ENCODE measurements at regions of chr17 and their contacts with region 1.

Region 1: GRCh38 chr17:50161023-50161910 is 4.5 kb upstream of the SGCA start:
- H3K4me3 ChIP-seq: peak overlapping the region; percentile 54
- H3K27ac ChIP-seq: peak overlapping the region; percentile 17; the same call in 1 of the 2 replicates
- H3K4me1 ChIP-seq: no peaks in the 10 kb centered on the region
- CTCF ChIP-seq: peak; percentile 100

Region 2: GRCh38 chr17:50101346-50102163 is 59.7 kb before region 1 on chr17:
- CTCF ChIA-PET with region 1: interaction called, 16 read pairs
- POLR2A ChIA-PET with region 1: no interaction called
- H3K4me3 ChIP-seq: no peak overlapping the region
- H3K27ac ChIP-seq: no peak overlapping the region
- H3K4me1 ChIP-seq: peaks cover 7% of the 10 kb centered on the region
- CTCF ChIP-seq: no peak

Region 3: GRCh38 chr17:50114849-50115357 is 46.4 kb before region 1 on chr17:
- CTCF ChIA-PET with region 1: interaction called, 51 read pairs
- POLR2A ChIA-PET with region 1: no interaction called
- H3K4me3 ChIP-seq: no peak overlapping the region
- H3K27ac ChIP-seq: no peak overlapping the region
- H3K4me1 ChIP-seq: no peaks in the 10 kb centered on the region; the same call in 1 of the 2 replicates
- CTCF ChIP-seq: peak; percentile 58

Region 4: GRCh38 chr17:50123649-50124349 is 37.5 kb before region 1 on chr17:
- CTCF ChIA-PET with region 1: interaction called, 21 read pairs
- POLR2A ChIA-PET with region 1: no interaction called
- H3K4me3 ChIP-seq: no peak overlapping the region
- H3K27ac ChIP-seq: peak overlapping the region; percentile 60
- H3K4me1 ChIP-seq: peaks cover 13% of the 10 kb centered on the region
- CTCF ChIP-seq: no peak

Region 5: GRCh38 chr17:50177983-50178834 is 16.9 kb after region 1 on chr17:
- CTCF ChIA-PET with region 1: interaction called, 66 read pairs
- POLR2A ChIA-PET with region 1: interaction called, 5 read pairs
- H3K4me3 ChIP-seq: no peak overlapping the region
- H3K27ac ChIP-seq: peak overlapping the region; percentile 76
- H3K4me1 ChIP-seq: peaks cover 11% of the 10 kb centered on the region
- CTCF ChIP-seq: peak; percentile 99

Measured in HEK293 (cell line).